Astrocyte of the cerebellum (primary cell): ENCODE measurements at regions of chr1 and their contacts with region 1.

Region 1: GRCh38 chr1:214548988-214549387 is 2.4 kb downstream of the PTPN14 start:
- DNase-seq: no peak
- H3K4me3 ChIP-seq: peak overlapping the region; percentile 89
- CTCF ChIP-seq: no peak

Region 2: DNA sequence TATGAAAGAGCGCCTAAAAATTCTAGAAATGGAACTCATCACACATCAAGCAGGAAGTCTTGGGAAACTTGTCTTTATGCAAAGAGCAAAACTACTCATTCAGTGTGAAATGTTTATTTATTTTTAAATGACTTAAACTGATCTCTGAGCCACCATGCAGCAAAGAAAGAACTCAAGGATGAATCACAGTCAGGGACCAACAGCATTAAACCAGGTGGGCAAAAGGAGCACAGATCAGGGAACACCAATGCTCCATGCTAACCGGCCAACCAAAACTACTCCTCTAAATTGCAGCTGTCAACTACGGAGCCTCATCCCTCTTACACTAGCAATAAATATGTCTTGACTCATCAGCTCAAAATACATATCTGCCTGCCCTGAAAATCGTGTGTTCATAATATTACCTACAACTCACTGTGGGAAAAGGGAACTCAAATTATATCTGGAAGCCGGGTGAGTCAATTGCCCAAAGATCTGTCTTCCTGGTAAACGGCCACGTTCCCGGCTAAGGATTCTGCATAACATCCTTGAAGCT is 126.8 kb before region 1 on chr1:
- in situ Hi-C with region 1: loop called (anchors 5 kb)
- DNase-seq: no peak
- H3K4me3 ChIP-seq: no peak overlapping the region
- CTCF ChIP-seq: no peak

Region 3: GRCh38 chr1:214494706-214495105 is 54.3 kb before region 1 on chr1:
- in situ Hi-C with region 1: loop called (anchors 10 kb)
- DNase-seq: peak; percentile 34
- H3K4me3 ChIP-seq: no peak overlapping the region
- CTCF ChIP-seq: no peak